ENCODE measurements at regions of chr7 and their contacts with region 1.

Region 1: DNA sequence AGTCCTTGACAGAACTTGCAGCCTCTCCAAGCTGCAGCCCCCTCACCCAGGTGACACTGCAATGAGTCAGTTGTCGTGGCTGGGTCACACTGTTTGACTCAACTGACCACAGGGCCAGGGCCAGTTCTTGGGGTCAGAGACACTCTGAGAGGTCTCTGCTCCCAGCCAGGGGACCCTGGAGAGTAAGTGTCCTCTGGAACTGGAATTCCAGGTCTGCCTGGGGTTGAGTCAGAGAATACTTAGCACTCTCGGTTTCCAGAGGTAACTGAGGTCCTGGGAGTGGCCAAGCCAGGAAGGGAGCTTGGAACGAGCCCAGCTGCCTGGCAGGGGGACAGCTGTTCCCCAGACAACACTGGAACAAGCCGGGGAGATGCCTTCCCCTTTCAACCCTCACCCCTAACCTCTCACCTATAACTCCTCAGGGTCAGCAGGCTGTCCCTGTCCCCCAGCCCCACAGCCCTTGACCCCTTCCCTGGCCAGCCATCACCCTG is 2.2 kb upstream of the MYL10 start:
- DNase-seq: peak; percentile 53 to 69
- H3K4me3 ChIP-seq: peak overlapping the region; percentile 16; the same call in 1 of the 2 replicates
- H3K27ac ChIP-seq: peak overlapping the region; percentile 59
- H3K4me1 ChIP-seq: peaks cover 25% of the 10 kb centered on the region
- H3K27me3 ChIP-seq: no peaks in the 10 kb centered on the region
- CTCF ChIP-seq: no peak

Region 2: GRCh38 chr7:101650579-101651081 is 19.4 kb after region 1 on chr7:
- CTCF ChIA-PET with region 1: no interaction called
- POLR2A ChIA-PET with region 1: interaction called, 10 read pairs
- intact Hi-C with region 1: no loop called
- DNase-seq: no peak
- H3K4me3 ChIP-seq: peak overlapping the region; percentile 17; the same call in 1 of the 2 replicates
- H3K27ac ChIP-seq: no peak overlapping the region
- H3K4me1 ChIP-seq: no peaks in the 10 kb centered on the region
- H3K27me3 ChIP-seq: peaks cover 12% of the 10 kb centered on the region; the same call in 1 of the 2 replicates
- CTCF ChIP-seq: no peak

Region 3: GRCh38 chr7:101681170-101682007 is 50.1 kb after region 1 on chr7:
- CTCF ChIA-PET with region 1: no interaction called
- POLR2A ChIA-PET with region 1: interaction called, 11 read pairs
- intact Hi-C with region 1: no loop called
- DNase-seq: peak; percentile 62 to 84
- H3K4me3 ChIP-seq: no peak overlapping the region
- H3K27ac ChIP-seq: no peak overlapping the region
- H3K4me1 ChIP-seq: peaks cover 13% of the 10 kb centered on the region
- H3K27me3 ChIP-seq: no peaks in the 10 kb centered on the region
- CTCF ChIP-seq: no peak

Region 4: DNA sequence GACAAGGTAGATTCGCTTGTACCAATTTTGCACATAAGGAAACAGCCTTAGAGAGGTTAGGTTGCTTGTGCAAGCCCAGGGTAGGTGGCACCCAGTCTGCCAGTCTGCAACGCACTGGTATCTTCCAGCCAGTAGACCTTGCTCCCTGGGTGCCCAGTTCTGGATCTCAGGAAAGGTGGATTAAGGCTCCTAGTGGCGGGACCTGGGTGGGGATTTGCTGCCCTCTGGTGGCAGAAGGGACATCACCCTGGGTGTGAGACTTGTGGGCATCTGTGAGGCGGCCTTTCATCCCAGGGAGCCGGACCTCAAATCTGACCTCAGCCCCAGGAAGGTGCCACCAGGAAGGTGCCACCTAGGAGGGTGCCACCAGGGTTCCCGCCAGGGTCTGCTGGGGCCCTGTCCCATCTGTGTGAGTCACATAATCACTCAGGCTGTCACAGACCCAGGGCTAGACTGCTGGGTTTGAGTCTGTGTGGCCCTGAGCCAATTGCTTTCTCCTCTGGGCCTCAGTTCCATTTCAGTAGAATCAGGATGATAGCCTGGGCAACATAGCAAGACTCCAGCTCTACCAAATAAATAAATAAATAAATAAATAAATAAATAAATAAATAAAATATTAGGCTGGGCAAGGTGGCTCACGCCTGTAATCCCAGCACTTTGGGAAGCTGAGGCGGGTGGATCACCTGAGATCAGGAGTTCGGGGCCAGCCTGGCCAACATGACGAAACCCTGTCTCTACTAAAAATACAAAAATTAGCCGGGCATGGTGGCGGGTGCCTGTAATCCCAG is 759.6 kb after region 1 on chr7:
- CTCF ChIA-PET with region 1: no interaction called
- POLR2A ChIA-PET with region 1: no interaction called
- intact Hi-C with region 1: no loop called
- DNase-seq: peak; percentile 66 to 88
- H3K4me3 ChIP-seq: no peak overlapping the region
- H3K27ac ChIP-seq: no peak overlapping the region
- H3K4me1 ChIP-seq: peaks cover 34% of the 10 kb centered on the region
- H3K27me3 ChIP-seq: no peaks in the 10 kb centered on the region
- CTCF ChIP-seq: peak; percentile 89